Heart right ventricle (tissue), 16 donors: ENCODE measurements at regions of chr15 and their contacts with region 1.

Region 1: DNA sequence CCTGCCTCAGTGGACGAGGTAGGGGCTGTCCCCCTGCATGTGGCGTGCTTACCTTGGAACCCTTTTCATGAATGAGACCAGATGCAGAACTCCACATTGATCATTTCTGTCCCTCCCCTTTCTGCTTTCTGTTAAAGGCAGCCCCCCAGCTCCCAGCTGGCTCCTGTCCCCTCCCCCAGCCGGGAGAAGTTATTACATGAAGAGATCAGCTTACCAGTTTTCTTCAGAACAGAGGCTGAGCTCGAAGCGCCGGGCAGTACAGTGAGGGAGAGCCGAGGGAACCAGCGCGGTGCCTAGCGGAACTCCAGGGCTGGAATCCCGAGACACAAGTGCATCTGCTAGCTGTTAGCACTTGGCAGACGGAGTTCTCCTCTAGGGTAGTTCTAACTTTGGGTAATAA is 263.3 kb upstream of the NR2E3 start:
- DNase-seq: peak; percentile 29 to 42
- ATAC-seq: peak in 7 of 8 donors; percentile 64 to 78 (median 70)
- H3K4me3 ChIP-seq: peak overlapping the region in 4 of 10 donors; percentile 9 to 27 (median 15)
- H3K27ac ChIP-seq: peak overlapping the region in 7 of 10 donors; percentile 3 to 67 (median 35)
- H3K4me1 ChIP-seq: peaks cover 0 to 41% (median 23%) of the 10 kb centered on the region in 9 donors
- H3K27me3 ChIP-seq: no peaks in the 10 kb centered on the region
- CTCF ChIP-seq: no peak

Region 2: DNA sequence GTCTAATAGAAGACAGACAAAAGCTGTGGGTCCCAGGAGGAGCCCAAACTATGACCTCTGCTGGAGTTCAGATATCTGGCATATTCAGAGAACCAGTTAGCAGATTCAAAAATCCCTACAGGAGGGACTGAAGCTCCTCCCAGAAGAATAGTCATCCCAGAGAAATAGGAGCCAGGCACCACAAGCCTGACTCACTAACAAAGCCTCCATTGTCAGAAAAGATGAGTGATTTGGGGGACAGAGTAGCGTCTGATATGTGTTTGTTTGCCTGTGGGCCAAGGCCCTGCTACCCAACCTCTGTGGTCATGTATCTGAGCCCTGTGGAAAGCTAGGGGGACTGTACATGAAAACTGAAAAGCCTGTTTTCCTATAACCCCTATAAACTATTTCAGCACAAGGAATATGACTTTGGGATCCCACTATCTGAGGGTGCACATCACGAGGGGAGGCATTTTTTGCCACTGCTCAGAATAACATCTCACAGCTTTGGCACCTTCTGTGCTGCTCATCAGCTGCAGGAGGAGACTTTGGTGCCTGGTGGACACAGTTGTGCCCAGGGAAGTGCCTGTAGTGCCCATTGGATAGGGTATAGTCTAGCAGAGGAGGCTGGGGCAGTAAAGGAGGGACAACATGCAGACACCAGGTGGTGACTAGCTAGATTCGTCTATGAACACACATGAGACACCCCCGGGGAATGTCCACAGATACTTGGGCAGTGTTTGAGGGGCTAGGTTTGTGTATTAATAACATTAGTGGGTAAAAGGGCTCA is 683.4 kb before region 1 on chr15:
- intact Hi-C with region 1: no loop called
- DNase-seq: no peak
- ATAC-seq: peak in 7 of 8 donors; percentile 29 to 79 (median 57)
- H3K4me3 ChIP-seq: no peak overlapping the region
- H3K27ac ChIP-seq: peak overlapping the region in 9 of 10 donors; percentile 31 to 76 (median 55)
- H3K4me1 ChIP-seq: peaks cover 0 to 30% (median 15%) of the 10 kb centered on the region in 9 donors
- H3K27me3 ChIP-seq: no peaks in the 10 kb centered on the region
- CTCF ChIP-seq: no peak

Region 3: GRCh38 chr15:71455107-71455506 is 91.9 kb before region 1 on chr15:
- intact Hi-C with region 1: loop called in 1 of 10 experiments (anchors 10 kb)
- DNase-seq: no peak
- ATAC-seq: no peak
- H3K4me3 ChIP-seq: no peak overlapping the region
- H3K27ac ChIP-seq: no peak overlapping the region
- H3K4me1 ChIP-seq: peaks cover 5 to 64% (median 14%) of the 10 kb centered on the region in 9 donors
- H3K27me3 ChIP-seq: no peaks in the 10 kb centered on the region
- CTCF ChIP-seq: no peak

Region 4: DNA sequence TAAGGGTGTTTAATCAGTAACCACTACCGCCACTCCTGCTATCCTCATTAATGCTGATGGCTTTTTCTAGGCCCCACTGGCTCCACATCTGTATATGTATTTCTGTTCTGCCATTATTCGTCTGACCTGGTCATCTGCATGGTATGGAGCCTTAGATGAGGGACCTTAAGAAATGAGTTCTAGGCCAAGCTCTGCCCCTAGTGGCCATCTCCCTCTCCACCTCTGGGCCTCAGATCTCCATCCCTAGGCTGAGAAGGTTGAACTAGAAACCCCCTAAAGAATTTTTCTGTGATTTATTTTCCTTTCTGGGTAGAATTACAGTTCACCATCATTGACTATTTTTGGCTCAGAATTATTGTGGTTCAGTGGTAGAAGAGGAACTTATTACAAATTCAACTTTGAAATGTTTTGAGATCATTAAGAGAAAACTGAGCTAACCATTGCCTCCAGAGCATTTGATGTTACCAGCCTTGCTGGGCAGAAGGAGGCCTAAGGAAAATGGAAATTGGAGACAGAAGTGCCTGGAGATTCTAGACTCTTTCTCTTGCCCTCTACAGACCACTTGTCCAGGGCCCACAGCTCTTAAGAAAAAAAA is 61.8 kb before region 1 on chr15:
- intact Hi-C with region 1: no loop called
- DNase-seq: no peak
- ATAC-seq: no peak
- H3K4me3 ChIP-seq: no peak overlapping the region
- H3K27ac ChIP-seq: no peak overlapping the region
- H3K4me1 ChIP-seq: no peaks in the 10 kb centered on the region
- H3K27me3 ChIP-seq: no peaks in the 10 kb centered on the region
- CTCF ChIP-seq: peak in 5 of 9 donors; percentile 17 to 38 (median 22)

Region 5: DNA sequence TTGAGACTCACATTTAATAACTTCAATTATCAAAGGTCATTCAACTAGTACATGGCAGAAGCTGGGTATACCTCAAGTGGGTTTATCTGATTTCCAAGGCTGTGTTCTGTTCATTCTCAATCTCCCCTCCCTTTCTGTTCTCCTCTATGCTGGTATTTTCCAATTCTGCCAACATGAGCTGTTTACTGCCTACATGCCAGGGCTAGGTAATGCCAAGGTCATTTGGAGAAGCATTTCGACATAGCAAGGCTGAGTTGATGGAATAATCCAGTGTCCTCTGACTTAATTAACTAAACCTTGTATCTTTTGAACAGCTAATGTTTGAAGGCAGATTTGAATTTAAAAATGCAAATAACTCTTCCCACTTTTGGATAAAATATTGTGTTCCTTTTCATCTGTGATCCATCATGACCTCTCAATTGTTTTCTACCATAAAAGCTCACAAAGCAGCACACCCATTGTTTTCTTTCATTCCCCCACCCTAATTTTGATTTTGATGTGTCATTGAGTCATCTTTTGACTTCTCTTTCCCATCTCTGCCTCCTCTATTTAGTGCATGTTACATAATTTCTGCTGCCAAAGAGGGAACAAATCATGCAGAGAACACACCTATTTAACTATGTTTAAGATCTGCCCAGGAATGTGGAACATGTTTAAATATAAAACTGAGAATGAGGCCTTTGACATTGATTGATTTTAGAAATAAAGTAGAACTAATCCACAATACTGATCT is 45.5 kb before region 1 on chr15:
- intact Hi-C with region 1: loop called in 1 of 10 experiments (anchors 5 kb)
- DNase-seq: peak in 1 of 2 donors; percentile 37
- ATAC-seq: peak; percentile 69 to 96 (median 90)
- H3K4me3 ChIP-seq: no peak overlapping the region
- H3K27ac ChIP-seq: peak overlapping the region; percentile 13 to 73 (median 59)
- H3K4me1 ChIP-seq: peaks cover 0 to 36% (median 14%) of the 10 kb centered on the region in 9 donors
- H3K27me3 ChIP-seq: no peaks in the 10 kb centered on the region
- CTCF ChIP-seq: no peak

Region 6: GRCh38 chr15:71730277-71731144 is 183.5 kb after region 1 on chr15:
- intact Hi-C with region 1: loop called in 1 of 10 experiments (anchors 10 kb)
- DNase-seq: peak in 1 of 2 donors; percentile 64
- ATAC-seq: peak; percentile 76 to 89 (median 84)
- H3K4me3 ChIP-seq: no peak overlapping the region
- H3K27ac ChIP-seq: peak overlapping the region in 5 of 10 donors; percentile 5 to 52 (median 42)
- H3K4me1 ChIP-seq: peaks cover 0 to 39% (median 10%) of the 10 kb centered on the region in 9 donors
- H3K27me3 ChIP-seq: no peaks in the 10 kb centered on the region
- CTCF ChIP-seq: peak; percentile 47 to 89 (median 80)